ENCODE measurements at regions of chr4 and their contacts with region 1.

Region 1: DNA sequence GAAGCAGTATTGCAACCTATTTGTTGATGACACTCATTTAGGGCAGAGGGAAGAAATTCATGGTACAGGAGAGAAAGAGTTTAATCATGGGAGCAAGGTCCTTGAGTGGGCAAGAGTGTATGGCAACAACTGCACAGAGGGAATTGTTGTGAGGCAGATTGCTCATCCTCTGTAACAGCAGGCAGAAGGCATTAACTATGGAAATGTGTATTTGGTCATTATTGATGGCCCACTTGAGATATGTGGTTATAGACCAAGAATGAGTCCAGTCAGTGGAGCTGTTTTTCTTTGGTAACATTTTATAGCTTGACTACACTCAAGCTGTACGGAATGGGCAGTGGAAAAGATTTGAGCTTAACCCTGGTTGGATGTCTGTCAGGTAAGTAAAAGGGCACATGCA is 15.9 kb downstream of the PLRG1 start:
- DNase-seq: no peak
- ATAC-seq: no peak
- H3K4me3 ChIP-seq: no peak overlapping the region
- H3K27ac ChIP-seq: no peak overlapping the region
- H3K4me1 ChIP-seq: no peaks in the 10 kb centered on the region
- H3K27me3 ChIP-seq: no peaks in the 10 kb centered on the region
- CTCF ChIP-seq: no peak
- EP300 ChIP-seq: no peak
- POLR2A ChIP-seq: no peak
- RAD21 ChIP-seq: no peak

Region 2: DNA sequence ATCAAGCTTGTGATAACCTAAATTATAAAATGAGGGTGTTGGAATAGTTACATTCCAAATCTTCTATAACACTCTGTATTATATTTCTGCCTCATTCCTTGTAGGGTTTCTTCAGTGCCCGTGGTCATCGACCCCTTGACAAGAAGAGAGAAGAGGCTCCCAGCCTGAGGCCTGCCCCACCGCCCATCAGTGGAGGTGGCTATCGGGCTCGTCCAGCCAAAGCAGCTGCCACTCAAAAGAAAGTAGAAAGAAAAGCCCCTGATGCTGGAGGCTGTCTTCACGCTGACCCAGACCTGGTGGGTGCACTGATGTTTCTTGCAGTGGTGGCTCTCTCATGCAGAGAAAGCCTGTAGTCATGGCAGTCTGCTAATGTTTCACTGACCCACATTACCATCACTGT is 31.4 kb after region 1 on chr4:
- CTCF ChIA-PET with region 1: no interaction called
- POLR2A ChIA-PET with region 1: no interaction called
- in situ Hi-C with region 1: no loop called
- intact Hi-C with region 1: loop called (anchors 1 kb)
- DNase-seq: no peak
- ATAC-seq: no peak
- H3K4me3 ChIP-seq: no peak overlapping the region
- H3K27ac ChIP-seq: no peak overlapping the region
- H3K4me1 ChIP-seq: peaks cover 32% of the 10 kb centered on the region
- H3K27me3 ChIP-seq: no peaks in the 10 kb centered on the region; a peak in 1 of 5 replicates
- CTCF ChIP-seq: no peak
- EP300 ChIP-seq: no peak
- POLR2A ChIP-seq: no peak
- RAD21 ChIP-seq: no peak